OCI-LY7 (cell line): ENCODE measurements at regions of chrX and their contacts with region 1.

Region 1: GRCh38 chrX:110450050-110450449 is 91.4 kb downstream of the RTL9 start:
- DNase-seq: peak; percentile 44
- H3K4me3 ChIP-seq: no peak overlapping the region
- H3K27ac ChIP-seq: no peak overlapping the region
- H3K4me1 ChIP-seq: no peaks in the 10 kb centered on the region
- CTCF ChIP-seq: peak; percentile 74

Region 2: DNA sequence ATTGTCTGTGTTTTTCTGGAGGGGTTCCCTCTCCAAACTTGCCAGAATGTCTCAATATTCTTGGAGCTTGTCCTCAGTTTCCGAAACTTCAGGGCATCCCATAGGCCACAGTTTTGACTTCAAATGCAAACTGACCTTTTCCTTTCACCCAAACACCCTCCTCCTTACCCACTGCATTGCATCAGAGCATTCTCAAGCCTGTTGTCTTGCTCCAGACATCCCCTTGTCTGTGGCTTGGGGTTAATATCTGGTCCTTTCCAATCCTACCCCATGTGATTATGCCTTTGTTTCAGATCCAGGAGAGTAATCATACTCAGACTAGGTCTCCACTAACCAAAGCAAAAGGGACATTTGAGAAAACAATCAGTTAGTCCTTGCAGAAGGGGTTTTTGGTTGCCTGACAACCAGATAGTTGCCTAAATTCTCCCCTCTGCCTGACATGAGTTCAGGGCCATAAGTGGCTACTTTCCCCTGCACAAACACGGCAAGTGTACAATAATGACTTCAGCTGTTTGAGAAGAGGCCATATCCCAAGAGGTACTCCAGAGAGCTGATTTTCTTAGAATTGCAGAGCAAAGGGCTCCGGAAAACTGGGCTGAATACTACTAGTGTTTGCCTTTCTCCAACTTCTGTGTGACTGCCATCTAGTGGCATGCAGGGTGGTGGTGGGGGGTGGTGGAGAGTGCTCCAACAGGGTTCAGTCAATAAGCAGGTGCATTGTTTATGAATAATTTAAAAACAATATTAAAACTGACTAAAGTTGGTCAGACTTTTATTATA is 215.4 kb after region 1 on chrX:
- CTCF ChIA-PET with region 1: no interaction called
- POLR2A ChIA-PET with region 1: no interaction called
- intact Hi-C with region 1: loop called (anchors 1 kb)
- DNase-seq: peak; percentile 0
- H3K4me3 ChIP-seq: no peak overlapping the region
- H3K27ac ChIP-seq: no peak overlapping the region
- H3K4me1 ChIP-seq: no peaks in the 10 kb centered on the region
- CTCF ChIP-seq: peak; percentile 72

Region 3: DNA sequence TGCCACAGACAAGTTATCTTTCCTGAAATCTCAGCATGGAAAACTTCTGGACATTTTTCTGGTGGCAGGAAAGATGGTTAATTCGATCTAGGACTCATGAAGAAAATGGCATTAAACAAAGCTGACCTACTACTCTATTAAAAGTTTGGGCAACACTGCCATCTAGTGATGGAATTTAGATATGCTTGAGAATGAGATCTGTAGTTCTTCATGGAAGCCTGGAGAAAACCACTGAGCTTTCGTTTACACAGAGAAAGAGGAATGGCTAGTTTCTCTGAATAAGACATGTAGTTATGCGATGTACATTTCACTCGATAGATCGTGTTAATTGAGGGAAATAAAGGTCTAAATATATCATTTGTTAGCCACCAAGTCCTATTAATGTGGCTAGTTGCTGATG is 397.3 kb after region 1 on chrX:
- CTCF ChIA-PET with region 1: no interaction called
- POLR2A ChIA-PET with region 1: no interaction called
- intact Hi-C with region 1: loop called (anchors 1 kb)
- DNase-seq: peak; percentile 46
- H3K4me3 ChIP-seq: no peak overlapping the region
- H3K27ac ChIP-seq: no peak overlapping the region
- H3K4me1 ChIP-seq: no peaks in the 10 kb centered on the region
- CTCF ChIP-seq: peak; percentile 74